Activated CD8-positive, alpha-beta T cell treated with anti-CD3 and anti-CD28 coated beads for 36 hours (primary cell): ENCODE measurements at regions of chr21 and their contacts with region 1.

Region 1: GRCh38 chr21:34630536-34631143 is 15.7 kb upstream of the RCAN1 start:
- DNase-seq: peak; percentile 33
- ATAC-seq: peak; percentile 56
- H3K4me3 Mint-ChIP-seq: no peak overlapping the region
- H3K27ac Mint-ChIP-seq: no peak overlapping the region
- H3K4me1 Mint-ChIP-seq: no peaks in the 10 kb centered on the region
- H3K27me3 Mint-ChIP-seq: no peaks in the 10 kb centered on the region
- CTCF ChIP-seq: peak; percentile 93

Region 2: DNA sequence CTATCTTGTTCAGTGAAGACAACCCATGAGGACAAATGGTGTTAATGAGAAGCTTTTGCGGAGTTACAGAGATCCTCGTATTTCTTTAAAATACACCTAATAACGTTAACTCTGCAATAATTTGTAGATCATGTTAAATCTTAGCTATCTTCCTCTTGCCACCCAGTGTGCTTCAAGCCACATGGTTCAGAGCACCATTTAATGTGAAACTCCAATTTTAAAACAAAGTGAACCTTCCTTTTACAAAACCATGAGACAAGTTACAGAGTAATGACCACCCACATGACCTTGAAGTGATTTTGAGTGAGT is 268.6 kb before region 1 on chr21:
- CTCF ChIA-PET with region 1: interaction called, 23 read pairs
- POLR2A ChIA-PET with region 1: no interaction called
- intact Hi-C with region 1: no loop called
- DNase-seq: no peak
- ATAC-seq: peak; percentile 29
- H3K4me3 Mint-ChIP-seq: no peak overlapping the region
- H3K27ac Mint-ChIP-seq: no peak overlapping the region
- H3K4me1 Mint-ChIP-seq: peaks cover 3% of the 10 kb centered on the region
- H3K27me3 Mint-ChIP-seq: peaks cover 5% of the 10 kb centered on the region
- CTCF ChIP-seq: peak; percentile 53

Region 3: GRCh38 chr21:34510148-34511142 is 120.2 kb before region 1 on chr21:
- CTCF ChIA-PET with region 1: interaction called, 24 read pairs
- POLR2A ChIA-PET with region 1: no interaction called
- intact Hi-C with region 1: no loop called
- DNase-seq: peak; percentile 82
- ATAC-seq: peak; percentile 92
- H3K4me3 Mint-ChIP-seq: no peak overlapping the region
- H3K27ac Mint-ChIP-seq: no peak overlapping the region
- H3K4me1 Mint-ChIP-seq: no peaks in the 10 kb centered on the region
- H3K27me3 Mint-ChIP-seq: peaks cover 2% of the 10 kb centered on the region
- CTCF ChIP-seq: peak; percentile 59

Region 4: GRCh38 chr21:34603002-34603709 is 27.5 kb before region 1 on chr21:
- CTCF ChIA-PET with region 1: interaction called, 27 read pairs
- POLR2A ChIA-PET with region 1: no interaction called
- intact Hi-C with region 1: no loop called
- DNase-seq: peak; percentile 83
- ATAC-seq: peak; percentile 88
- H3K4me3 Mint-ChIP-seq: no peak overlapping the region
- H3K27ac Mint-ChIP-seq: no peak overlapping the region
- H3K4me1 Mint-ChIP-seq: no peaks in the 10 kb centered on the region
- H3K27me3 Mint-ChIP-seq: no peaks in the 10 kb centered on the region
- CTCF ChIP-seq: peak; percentile 81

Region 5: DNA sequence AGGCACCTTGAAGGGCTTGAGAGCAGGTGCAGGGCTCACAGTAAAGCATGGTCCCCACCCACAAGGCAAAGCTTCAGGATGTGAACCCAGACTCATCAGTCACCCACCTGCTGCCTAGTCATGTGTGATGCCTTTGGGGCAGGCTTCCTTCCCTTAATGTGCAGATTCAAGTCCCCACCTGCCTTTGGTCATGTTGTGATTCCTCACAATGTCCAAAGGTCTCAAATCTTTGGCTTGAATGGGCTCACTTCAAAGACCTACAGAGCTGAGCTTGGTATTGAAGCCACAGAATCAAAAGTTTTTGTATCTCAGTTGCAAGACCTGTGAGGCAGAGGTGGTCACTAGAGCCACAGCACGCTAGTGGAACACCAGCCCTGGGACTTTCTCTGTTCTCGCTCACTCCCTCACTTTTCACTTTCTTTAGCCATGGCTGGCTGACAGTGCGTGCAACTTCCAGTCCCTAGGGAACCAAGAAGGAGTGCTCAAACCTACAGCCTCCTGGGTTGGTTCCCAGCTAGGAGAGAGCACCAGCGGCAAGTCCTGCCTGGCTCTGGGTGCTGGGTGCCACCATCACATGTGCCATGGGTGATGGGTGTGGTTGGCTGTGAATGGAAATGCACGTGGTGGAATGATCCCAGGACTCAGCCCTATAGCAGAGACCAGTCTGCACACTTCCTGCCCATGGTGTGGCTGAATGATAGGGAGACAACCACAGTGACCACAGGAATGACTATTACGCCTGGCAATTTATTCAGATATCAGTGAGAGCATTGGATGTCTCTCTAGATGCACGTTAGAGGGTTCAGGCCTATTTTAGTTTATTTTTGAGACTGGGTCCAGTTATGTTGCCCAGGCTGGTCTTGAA is 11.8 kb after region 1 on chr21:
- CTCF ChIA-PET with region 1: interaction called, 12 read pairs
- POLR2A ChIA-PET with region 1: no interaction called
- intact Hi-C with region 1: no loop called
- DNase-seq: peak; percentile 7
- ATAC-seq: no peak
- H3K4me3 Mint-ChIP-seq: no peak overlapping the region
- H3K27ac Mint-ChIP-seq: no peak overlapping the region
- H3K4me1 Mint-ChIP-seq: peaks cover 17% of the 10 kb centered on the region
- H3K27me3 Mint-ChIP-seq: peaks cover 2% of the 10 kb centered on the region
- CTCF ChIP-seq: no peak